Prostate gland (tissue), 2 donors: ENCODE measurements at regions of chr11 and their contacts with region 1.

Region 1: DNA sequence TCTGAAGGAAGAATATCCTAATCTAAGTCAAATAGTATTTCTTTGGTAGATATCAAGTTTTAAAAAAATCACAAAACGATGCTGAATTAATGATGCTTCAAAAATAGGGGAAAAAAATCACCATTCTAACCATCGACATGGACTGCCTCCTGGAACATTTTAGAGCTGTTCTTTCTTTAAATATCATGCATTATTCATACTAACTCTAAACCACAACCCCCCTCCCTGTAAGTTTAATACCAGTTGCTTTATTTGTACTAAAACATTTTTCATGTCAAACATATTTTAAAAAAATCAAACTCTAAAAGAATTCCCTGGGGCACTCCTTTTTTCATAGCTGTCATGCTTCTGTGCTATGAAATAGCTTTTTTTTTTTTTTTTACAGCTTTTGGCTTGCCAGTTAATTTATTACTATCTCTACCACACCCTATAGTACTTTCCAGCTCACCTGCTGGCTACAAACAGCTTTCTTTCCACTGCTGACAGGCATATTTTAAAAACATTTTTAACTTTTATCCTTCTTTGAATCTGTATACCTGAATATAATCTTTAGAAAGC is 256.9 kb downstream of the SOX6 start:
- DNase-seq: no peak
- H3K4me3 ChIP-seq: no peak overlapping the region
- H3K27ac ChIP-seq: no peak overlapping the region
- H3K4me1 ChIP-seq: no peaks in the 10 kb centered on the region
- H3K27me3 ChIP-seq: no peaks in the 10 kb centered on the region
- CTCF ChIP-seq: no peak
- POLR2A ChIP-seq: no peak

Region 2: DNA sequence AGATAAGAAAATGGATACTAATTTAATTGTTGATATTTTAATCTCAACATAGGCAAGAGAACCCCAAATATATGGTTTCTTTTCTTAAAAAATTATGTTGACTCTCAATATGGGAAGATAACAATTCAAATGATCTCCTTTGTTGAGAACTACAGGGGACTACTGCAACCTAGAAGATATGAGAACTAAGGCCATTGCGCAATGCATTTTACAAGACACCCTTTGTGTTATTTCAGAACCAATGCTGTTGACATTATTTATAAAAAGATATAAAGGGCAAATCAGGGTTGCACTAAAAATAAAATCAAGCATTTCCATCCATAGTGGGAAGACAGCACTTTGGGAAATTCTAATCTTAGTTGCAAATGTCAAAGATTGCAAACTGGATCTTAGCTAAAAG is 65.3 kb before region 1 on chr11:
- intact Hi-C with region 1: no loop called
- DNase-seq: no peak
- H3K4me3 ChIP-seq: no peak overlapping the region
- H3K27ac ChIP-seq: no peak overlapping the region
- H3K4me1 ChIP-seq: no peaks in the 10 kb centered on the region
- H3K27me3 ChIP-seq: no peaks in the 10 kb centered on the region
- CTCF ChIP-seq: no peak
- POLR2A ChIP-seq: no peak

Region 3: GRCh38 chr11:16082095-16083055 is 17.0 kb before region 1 on chr11:
- intact Hi-C with region 1: loop called (anchors 2 kb)
- DNase-seq: no peak
- H3K4me3 ChIP-seq: no peak overlapping the region
- H3K27ac ChIP-seq: no peak overlapping the region
- H3K4me1 ChIP-seq: no peaks in the 10 kb centered on the region
- H3K27me3 ChIP-seq: no peaks in the 10 kb centered on the region
- CTCF ChIP-seq: no peak
- POLR2A ChIP-seq: no peak